PC-3 (cell line): ENCODE measurements at regions of chr1 and their contacts with region 1.

Region 1: DNA sequence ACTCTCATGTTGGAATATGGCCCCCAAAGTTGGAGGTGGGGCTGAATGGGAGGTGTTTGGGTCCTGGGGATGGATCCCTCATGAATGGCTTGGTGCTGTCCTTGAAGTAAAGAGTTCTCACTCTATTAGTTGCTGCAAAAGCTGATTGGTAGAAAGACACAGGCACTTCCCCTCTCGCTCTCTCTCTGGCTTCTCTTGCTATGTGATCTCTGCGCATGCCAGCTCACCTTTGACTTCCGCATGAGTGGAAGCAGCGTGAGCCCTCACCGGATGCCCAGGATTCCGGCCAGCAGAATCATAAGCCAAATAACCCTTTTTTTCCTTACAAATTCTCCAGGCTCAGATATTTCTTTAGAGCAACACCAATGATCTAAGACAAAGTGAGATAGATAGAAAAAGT is 20.9 kb upstream of the CCSAP start:
- DNase-seq: no peak
- ATAC-seq: no peak
- H3K4me3 ChIP-seq: no peak overlapping the region
- H3K27ac ChIP-seq: no peak overlapping the region
- H3K4me1 ChIP-seq: no peaks in the 10 kb centered on the region
- H3K27me3 ChIP-seq: peaks cover 46% of the 10 kb centered on the region
- CTCF ChIP-seq: no peak

Region 2: DNA sequence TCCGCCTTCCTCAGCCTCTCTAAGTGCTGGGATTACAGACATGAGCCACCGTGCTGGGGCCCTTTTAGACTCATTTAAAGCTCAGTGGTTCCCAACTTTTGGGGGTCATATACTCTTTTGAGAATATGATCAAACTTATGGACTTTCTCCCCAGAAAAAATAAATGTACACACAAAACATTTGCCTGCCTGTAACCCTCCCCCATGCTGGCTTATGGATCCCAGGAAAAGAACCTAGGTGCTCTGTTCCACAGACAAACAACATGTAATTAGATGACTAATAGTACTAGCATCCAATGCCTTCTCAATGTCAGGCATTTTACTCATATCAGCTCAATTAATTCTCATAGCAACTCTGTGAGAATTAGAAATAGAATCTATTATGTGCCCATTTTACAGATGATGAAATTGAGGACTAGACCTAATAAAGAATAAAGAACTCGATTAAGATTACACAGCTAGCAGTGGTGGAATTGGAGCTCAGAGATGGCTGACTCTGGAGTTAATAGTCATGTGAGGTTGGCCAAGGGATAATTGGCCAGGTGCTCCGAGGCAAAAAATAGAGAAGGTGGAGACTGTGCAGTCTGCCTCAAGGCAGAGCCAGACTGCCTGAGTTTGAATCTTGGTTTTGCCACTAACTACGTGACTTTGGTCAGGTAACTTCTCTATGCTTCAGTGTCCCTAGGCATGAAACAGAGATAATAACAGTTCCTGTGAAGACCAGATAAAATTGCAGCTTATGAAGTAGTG is 14.4 kb before region 1 on chr1:
- CTCF ChIA-PET with region 1: no interaction called
- POLR2A ChIA-PET with region 1: interaction called, 11 read pairs
- intact Hi-C with region 1: no loop called
- DNase-seq: peak; percentile 14
- ATAC-seq: no peak
- H3K4me3 ChIP-seq: no peak overlapping the region
- H3K27ac ChIP-seq: no peak overlapping the region
- H3K4me1 ChIP-seq: no peaks in the 10 kb centered on the region
- H3K27me3 ChIP-seq: peaks cover 24% of the 10 kb centered on the region
- CTCF ChIP-seq: no peak